B cell (primary cell): ENCODE measurements at regions of chr19 and their contacts with region 1.

Region 1: GRCh38 chr19:38004521-38005223 is 97.7 kb downstream of the SIPA1L3 start:
- DNase-seq: peak; percentile 79
- ATAC-seq: peak; percentile 45
- H3K4me3 ChIP-seq: peak overlapping the region in 4 of 5 experiments; percentile 5 to 55 (median 50)
- H3K4me3 Mint-ChIP-seq: no peak overlapping the region
- H3K27ac ChIP-seq: peak overlapping the region; percentile 85 to 92
- H3K27ac Mint-ChIP-seq: no peak overlapping the region
- H3K4me1 ChIP-seq: peaks cover 73 to 83% of the 10 kb centered on the region in 2 donors
- H3K4me1 Mint-ChIP-seq: peaks cover 35% of the 10 kb centered on the region
- H3K27me3 ChIP-seq: no peaks in the 10 kb centered on the region
- H3K27me3 Mint-ChIP-seq: no peaks in the 10 kb centered on the region
- CTCF ChIP-seq: no peak

Region 2: DNA sequence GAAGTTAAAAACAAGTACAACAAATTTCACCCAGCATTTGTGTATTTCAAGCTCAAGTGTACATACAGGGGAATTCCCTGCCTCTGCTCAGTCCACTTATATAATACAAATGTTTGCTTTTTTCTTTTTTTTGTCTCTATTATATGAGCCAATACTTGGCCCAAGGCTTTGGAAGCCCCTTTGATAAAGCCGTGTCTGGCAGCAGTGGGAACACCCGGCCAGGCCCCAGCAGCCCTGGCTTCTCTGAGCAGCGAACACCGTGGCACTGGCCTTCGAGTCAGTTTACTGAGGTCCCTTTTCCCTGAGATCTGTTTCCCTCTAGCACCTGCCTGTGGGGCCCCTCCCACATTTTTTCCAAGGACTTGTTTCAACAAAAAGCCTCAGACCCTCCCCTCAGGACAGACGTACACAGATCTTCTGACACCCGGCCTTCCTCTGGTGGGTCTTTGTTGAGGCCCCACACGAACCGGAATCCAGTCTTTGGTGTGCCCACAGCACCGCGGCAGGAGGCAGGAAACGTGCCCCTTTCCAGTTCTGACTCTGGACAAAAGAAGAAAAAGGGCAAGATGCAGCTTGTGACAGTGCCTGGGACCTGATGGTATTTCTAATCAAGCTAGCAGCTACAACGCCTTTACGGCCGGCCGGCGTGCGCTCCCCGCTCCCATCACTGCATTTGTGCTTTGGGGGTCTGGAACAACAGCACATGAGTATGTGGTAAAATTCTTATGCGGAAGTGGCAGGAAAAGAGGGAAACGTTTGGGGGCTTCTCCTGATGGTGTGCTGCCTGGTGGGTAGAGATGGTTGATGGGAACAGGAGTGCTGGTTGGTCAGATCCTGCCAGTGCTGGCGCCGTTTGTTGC is 83.9 kb before region 1 on chr19:
- CTCF ChIA-PET with region 1: interaction called, 3 read pairs
- POLR2A ChIA-PET with region 1: interaction called, 11 read pairs
- intact Hi-C with region 1: no loop called
- DNase-seq: peak; percentile 45
- ATAC-seq: peak; percentile 12
- H3K4me3 ChIP-seq: peak overlapping the region in 4 of 5 experiments; percentile 1 to 56 (median 24)
- H3K4me3 Mint-ChIP-seq: peak overlapping the region; percentile 80
- H3K27ac ChIP-seq: peak overlapping the region; percentile 72 to 87
- H3K27ac Mint-ChIP-seq: peak overlapping the region; percentile 95
- H3K4me1 ChIP-seq: peaks cover 77 to 87% of the 10 kb centered on the region in 2 donors
- H3K4me1 Mint-ChIP-seq: peaks cover 69% of the 10 kb centered on the region
- H3K27me3 ChIP-seq: no peaks in the 10 kb centered on the region
- H3K27me3 Mint-ChIP-seq: no peaks in the 10 kb centered on the region
- CTCF ChIP-seq: no peak

Region 3: DNA sequence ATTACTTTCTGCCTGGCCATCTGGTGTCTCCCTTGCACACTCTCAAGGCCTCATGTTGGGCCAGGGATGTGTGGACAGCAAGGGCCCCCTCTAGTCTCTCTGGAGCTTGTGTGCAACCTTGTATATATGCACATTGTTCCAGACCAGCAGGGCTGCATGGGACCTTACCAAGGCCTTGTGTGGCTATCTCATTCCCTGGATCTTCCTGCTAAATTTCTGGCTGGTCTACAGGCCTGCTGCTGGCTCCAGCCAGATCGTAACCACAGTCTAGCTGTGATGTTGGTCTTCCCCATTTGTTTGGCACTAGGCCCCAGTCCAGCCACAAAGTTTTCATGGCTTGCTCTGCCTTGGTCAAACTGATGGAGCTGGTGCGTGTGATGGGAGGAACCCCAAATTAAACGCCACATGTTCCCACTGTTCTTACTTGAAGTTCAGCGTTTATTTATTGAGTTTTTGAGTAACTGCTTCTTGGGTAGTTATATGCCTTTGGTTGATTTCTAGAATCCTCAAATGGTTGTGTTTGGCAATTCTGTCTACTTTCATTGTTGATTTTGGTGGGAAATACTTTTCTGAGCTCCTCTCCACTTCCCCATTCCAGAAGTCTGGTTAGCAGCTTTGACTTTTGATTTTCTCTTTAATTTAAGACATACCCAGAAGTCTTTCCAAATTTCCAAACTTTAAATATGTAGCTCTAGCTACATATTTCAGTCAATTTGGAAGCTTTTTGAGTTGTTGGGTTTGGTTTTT is 41.3 kb before region 1 on chr19:
- CTCF ChIA-PET with region 1: no interaction called
- POLR2A ChIA-PET with region 1: interaction called, 4 read pairs
- intact Hi-C with region 1: loop called (anchors 5 kb)
- DNase-seq: no peak
- ATAC-seq: no peak
- H3K4me3 ChIP-seq: no peak overlapping the region
- H3K4me3 Mint-ChIP-seq: peak overlapping the region; percentile 29
- H3K27ac ChIP-seq: peak overlapping the region; percentile 69 to 77
- H3K27ac Mint-ChIP-seq: peak overlapping the region; percentile 91
- H3K4me1 ChIP-seq: peaks cover 58 to 72% of the 10 kb centered on the region in 2 donors
- H3K4me1 Mint-ChIP-seq: peaks cover 71% of the 10 kb centered on the region
- H3K27me3 ChIP-seq: no peaks in the 10 kb centered on the region
- H3K27me3 Mint-ChIP-seq: no peaks in the 10 kb centered on the region
- CTCF ChIP-seq: no peak

Region 4: GRCh38 chr19:37979547-37980082 is 25.1 kb before region 1 on chr19:
- CTCF ChIA-PET with region 1: interaction called, 4 read pairs
- POLR2A ChIA-PET with region 1: interaction called, 43 read pairs
- intact Hi-C with region 1: loop called (anchors 1 kb)
- DNase-seq: peak; percentile 66
- ATAC-seq: no peak
- H3K4me3 ChIP-seq: peak overlapping the region in 2 of 5 experiments; percentile 19 to 45
- H3K4me3 Mint-ChIP-seq: peak overlapping the region; percentile 65
- H3K27ac ChIP-seq: peak overlapping the region; percentile 89 to 92
- H3K27ac Mint-ChIP-seq: peak overlapping the region; percentile 94
- H3K4me1 ChIP-seq: peaks cover 79 to 99% of the 10 kb centered on the region in 2 donors
- H3K4me1 Mint-ChIP-seq: peaks cover 87% of the 10 kb centered on the region
- H3K27me3 ChIP-seq: no peaks in the 10 kb centered on the region
- H3K27me3 Mint-ChIP-seq: no peaks in the 10 kb centered on the region
- CTCF ChIP-seq: no peak

Region 5: DNA sequence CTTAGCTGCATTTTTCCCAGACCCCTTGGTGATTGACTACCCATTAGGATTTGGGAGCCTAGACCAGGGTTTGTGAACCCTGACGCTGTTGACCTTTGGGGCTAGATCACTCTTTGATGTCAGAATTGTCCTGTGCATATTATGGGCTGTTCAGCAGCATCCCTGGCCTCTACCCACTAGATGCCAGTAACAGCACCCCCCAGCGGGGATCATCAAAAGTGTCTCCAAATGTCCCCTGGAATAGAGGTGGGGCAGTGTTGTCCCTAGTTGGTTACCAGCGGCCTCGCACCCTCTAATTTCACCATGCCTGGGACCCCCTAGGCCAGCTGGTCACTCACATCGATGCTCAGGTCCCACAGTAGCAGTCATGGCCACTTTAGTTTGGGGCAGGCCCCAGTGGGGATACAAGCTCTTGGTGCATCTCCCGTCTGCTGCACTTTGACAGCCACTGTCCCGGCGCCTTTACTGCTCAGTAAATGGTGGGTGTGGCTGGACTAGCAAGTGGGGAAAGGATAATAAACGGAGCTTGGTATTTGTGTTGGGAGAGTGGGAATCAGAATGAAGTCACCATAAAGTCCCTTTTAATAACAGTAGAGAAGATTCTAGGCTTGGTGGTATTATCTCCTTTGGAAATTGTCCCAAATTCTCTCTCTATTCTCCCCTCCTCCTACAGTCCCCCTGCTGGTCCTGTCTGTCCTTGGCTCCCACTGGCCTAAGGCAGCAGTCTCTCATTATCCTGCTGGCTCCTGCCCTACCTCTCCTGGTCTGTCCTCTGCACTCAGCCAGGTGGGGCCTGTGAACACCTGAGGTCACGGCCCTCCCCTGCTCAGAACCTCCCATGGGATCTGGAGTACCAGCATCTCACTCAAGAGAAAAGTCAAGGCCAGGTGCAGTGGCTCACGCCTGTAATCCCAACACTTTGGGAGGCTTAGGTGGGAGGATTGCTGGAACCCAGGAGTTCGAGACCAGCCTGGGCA is 17.0 kb before region 1 on chr19:
- CTCF ChIA-PET with region 1: interaction called, 16 read pairs
- POLR2A ChIA-PET with region 1: interaction called, 21 read pairs
- intact Hi-C with region 1: no loop called
- DNase-seq: no peak
- ATAC-seq: no peak
- H3K4me3 ChIP-seq: no peak overlapping the region
- H3K4me3 Mint-ChIP-seq: no peak overlapping the region
- H3K27ac ChIP-seq: peak overlapping the region; percentile 88 to 93
- H3K27ac Mint-ChIP-seq: peak overlapping the region; percentile 99
- H3K4me1 ChIP-seq: peaks cover 75 to 91% of the 10 kb centered on the region in 2 donors
- H3K4me1 Mint-ChIP-seq: peaks cover 85% of the 10 kb centered on the region
- H3K27me3 ChIP-seq: no peaks in the 10 kb centered on the region
- H3K27me3 Mint-ChIP-seq: no peaks in the 10 kb centered on the region
- CTCF ChIP-seq: no peak

Region 6: GRCh38 chr19:38033658-38034498 is 29.2 kb after region 1 on chr19:
- CTCF ChIA-PET with region 1: interaction called, 12 read pairs
- POLR2A ChIA-PET with region 1: interaction called, 14 read pairs
- intact Hi-C with region 1: loop called (anchors 1 kb)
- DNase-seq: peak; percentile 93
- ATAC-seq: peak; percentile 79
- H3K4me3 ChIP-seq: peak overlapping the region in 3 of 5 experiments; percentile 16 to 43 (median 36)
- H3K4me3 Mint-ChIP-seq: peak overlapping the region; percentile 86
- H3K27ac ChIP-seq: peak overlapping the region; percentile 84 to 93
- H3K27ac Mint-ChIP-seq: peak overlapping the region; percentile 99
- H3K4me1 ChIP-seq: peaks cover 63 to 87% of the 10 kb centered on the region in 2 donors
- H3K4me1 Mint-ChIP-seq: peaks cover 81% of the 10 kb centered on the region
- H3K27me3 ChIP-seq: no peaks in the 10 kb centered on the region
- H3K27me3 Mint-ChIP-seq: no peaks in the 10 kb centered on the region
- CTCF ChIP-seq: peak; percentile 65

Region 7: DNA sequence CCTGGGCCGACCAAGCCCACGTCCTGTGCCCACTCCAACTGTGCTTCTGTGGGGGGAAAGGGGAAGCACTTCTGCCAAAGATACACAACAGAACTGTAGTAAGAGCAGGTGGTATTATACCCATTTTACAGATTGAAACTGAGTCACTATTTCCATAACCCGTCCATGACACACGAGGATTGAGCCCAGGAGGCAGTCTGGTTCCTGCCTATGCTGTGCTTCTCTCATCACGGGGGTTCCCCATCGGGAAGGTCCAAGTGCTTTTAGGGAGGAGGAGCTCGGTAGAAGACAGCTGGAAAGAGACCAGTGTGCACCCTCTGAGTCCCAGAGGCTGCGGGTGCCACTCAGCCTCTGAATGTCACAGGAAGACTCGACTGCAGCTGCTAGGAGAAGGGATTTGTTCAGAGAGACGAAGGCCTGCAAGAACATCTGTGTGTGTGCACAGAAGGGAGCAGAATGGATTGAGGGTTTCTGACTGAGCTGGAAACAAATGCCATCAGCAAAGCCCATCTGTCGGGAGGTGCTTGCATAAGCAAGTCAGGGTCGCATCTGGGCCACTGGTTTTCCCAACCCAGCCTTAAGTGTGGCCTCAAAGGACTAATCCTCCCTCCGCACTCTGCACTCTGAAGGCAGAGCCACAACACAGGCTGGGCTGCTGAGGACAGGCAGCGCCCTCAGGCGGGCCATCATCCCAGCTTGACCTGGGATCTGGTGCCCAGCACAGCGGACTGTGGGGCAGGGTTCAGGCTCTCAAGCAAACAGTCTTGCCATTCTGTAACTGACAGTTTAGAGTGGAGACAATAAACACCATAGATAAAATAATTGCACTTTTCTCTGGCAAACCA is 69.4 kb after region 1 on chr19:
- CTCF ChIA-PET with region 1: no interaction called
- POLR2A ChIA-PET with region 1: no interaction called
- intact Hi-C with region 1: no loop called
- DNase-seq: no peak
- ATAC-seq: no peak
- H3K4me3 ChIP-seq: no peak overlapping the region
- H3K4me3 Mint-ChIP-seq: no peak overlapping the region
- H3K27ac ChIP-seq: no peak overlapping the region
- H3K27ac Mint-ChIP-seq: peak overlapping the region; percentile 64
- H3K4me1 ChIP-seq: no peaks in the 10 kb centered on the region
- H3K4me1 Mint-ChIP-seq: peaks cover 27% of the 10 kb centered on the region
- H3K27me3 ChIP-seq: no peaks in the 10 kb centered on the region
- H3K27me3 Mint-ChIP-seq: no peaks in the 10 kb centered on the region
- CTCF ChIP-seq: no peak

Region 8: GRCh38 chr19:38304866-38305429 is 300.3 kb after region 1 on chr19:
- CTCF ChIA-PET with region 1: no interaction called
- POLR2A ChIA-PET with region 1: no interaction called
- intact Hi-C with region 1: no loop called
- DNase-seq: no peak
- ATAC-seq: no peak
- H3K4me3 ChIP-seq: no peak overlapping the region
- H3K4me3 Mint-ChIP-seq: no peak overlapping the region
- H3K27ac ChIP-seq: no peak overlapping the region
- H3K27ac Mint-ChIP-seq: no peak overlapping the region
- H3K4me1 ChIP-seq: no peaks in the 10 kb centered on the region
- H3K4me1 Mint-ChIP-seq: no peaks in the 10 kb centered on the region
- H3K27me3 ChIP-seq: no peaks in the 10 kb centered on the region
- H3K27me3 Mint-ChIP-seq: no peaks in the 10 kb centered on the region
- CTCF ChIP-seq: no peak